ENCODE measurements at regions of chr3 and their contacts with region 1.

Region 1: GRCh38 chr3:143795874-143796273 is 52.4 kb downstream of the SLC9A9 start:
- DNase-seq: peak; percentile 24
- H3K4me3 Mint-ChIP-seq: no peak overlapping the region
- H3K27ac Mint-ChIP-seq: no peak overlapping the region
- H3K4me1 Mint-ChIP-seq: peaks cover 18% of the 10 kb centered on the region
- H3K27me3 Mint-ChIP-seq: no peaks in the 10 kb centered on the region
- CTCF ChIP-seq: no peak

Region 2: DNA sequence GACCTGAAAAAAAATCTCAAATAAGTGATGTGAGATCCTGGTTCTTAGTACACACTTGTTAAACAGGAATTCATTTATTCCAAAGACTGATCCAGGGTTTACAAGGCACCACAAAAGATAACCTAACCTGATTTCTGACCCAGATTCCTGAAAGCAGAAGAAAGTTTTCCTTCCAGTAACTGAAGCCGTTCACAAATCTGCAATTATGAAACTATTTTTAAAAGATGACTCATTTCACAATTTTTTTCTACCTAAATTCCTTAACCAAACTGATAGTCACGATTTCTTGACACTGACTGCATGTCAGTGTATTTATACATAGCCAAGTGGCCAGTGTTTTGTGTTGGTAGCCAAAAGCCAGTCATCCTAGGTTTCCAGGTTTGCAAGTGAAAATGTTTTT is 35.3 kb after region 1 on chr3:
- CTCF ChIA-PET with region 1: no interaction called
- intact Hi-C with region 1: loop called (anchors 2 kb)
- DNase-seq: no peak
- H3K4me3 Mint-ChIP-seq: no peak overlapping the region
- H3K27ac Mint-ChIP-seq: no peak overlapping the region
- H3K4me1 Mint-ChIP-seq: peaks cover 6% of the 10 kb centered on the region
- H3K27me3 Mint-ChIP-seq: no peaks in the 10 kb centered on the region
- CTCF ChIP-seq: no peak

Region 3: GRCh38 chr3:143865302-143865701 is 69.4 kb after region 1 on chr3:
- CTCF ChIA-PET with region 1: no interaction called
- intact Hi-C with region 1: loop called (anchors 5 kb)
- DNase-seq: no peak
- H3K4me3 Mint-ChIP-seq: no peak overlapping the region
- H3K27ac Mint-ChIP-seq: no peak overlapping the region
- H3K4me1 Mint-ChIP-seq: peaks cover 9% of the 10 kb centered on the region
- H3K27me3 Mint-ChIP-seq: no peaks in the 10 kb centered on the region
- CTCF ChIP-seq: no peak

Measured in Calu3 (cell line).